GM18951 (cell line): ENCODE measurements at regions of chr4 and their contacts with region 1.

Region 1: DNA sequence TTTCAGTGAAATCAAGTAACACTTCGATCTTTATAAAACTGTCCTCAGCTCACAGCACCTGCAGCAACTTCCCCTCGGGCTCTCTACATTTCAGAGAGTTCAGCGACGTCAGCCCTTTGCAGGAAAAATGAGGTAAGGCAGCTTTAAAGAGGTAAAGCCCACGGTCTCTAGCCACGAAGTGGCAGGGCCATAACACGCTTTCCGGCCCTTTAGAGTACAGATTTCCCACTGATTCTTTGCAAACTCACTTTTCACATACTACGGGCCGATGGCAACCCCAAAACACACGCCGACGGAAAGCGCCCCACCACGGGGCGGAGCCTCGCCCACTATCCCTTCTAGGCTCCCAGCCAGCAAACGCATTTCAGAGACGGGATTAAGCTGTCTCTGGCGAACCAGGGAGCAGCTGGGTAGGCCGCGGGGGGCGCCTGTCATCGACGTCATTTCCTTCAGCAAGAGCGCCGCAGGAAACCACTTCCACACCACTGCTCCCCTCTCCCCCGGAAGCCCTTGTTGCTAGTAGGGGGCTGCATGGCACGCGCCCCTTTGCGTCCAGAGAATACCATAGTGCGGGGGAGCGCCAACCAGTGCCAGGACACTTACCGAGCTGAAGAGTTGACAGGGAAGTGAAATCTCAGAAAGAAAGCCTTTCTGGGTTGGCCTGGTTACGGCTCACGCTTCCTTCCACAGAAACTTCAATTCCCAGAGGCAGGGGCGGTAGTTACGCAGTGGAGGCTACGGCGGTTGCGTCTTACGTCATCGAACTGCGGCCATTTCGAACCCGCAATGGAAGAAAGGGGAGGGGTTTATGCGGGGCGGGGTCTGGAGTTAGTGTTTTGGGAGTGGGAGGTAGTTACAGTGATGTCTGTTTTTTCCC is at the start of gene TRMT10A:
- POLR2A ChIP-seq: peak; percentile 83

Region 2: GRCh38 chr4:99324979-99325378 is 238.6 kb before region 1 on chr4:
- in situ Hi-C with region 1: no loop called
- POLR2A ChIP-seq: no peak

Region 3: DNA sequence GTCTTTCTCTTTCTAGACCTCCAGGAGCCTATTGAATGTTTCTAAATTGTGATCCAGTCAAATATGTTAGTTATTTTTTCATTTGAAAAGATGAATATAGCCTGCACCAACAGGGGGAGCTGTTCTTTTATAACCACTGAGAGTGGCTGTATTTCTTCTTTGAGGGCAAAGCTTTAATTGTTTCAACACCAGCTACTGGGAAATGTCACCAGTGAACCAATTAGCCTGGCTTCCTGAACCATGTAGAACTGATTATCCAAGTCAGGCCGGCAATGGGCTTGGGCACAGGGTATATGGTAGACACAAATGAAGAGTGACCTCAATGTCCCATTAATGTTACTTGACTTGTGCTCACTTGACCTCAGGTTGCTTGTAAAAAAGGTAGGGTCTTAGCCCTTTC is 248.3 kb after region 1 on chr4:
- in situ Hi-C with region 1: loop called (anchors 5 kb)
- POLR2A ChIP-seq: no peak

Region 4: DNA sequence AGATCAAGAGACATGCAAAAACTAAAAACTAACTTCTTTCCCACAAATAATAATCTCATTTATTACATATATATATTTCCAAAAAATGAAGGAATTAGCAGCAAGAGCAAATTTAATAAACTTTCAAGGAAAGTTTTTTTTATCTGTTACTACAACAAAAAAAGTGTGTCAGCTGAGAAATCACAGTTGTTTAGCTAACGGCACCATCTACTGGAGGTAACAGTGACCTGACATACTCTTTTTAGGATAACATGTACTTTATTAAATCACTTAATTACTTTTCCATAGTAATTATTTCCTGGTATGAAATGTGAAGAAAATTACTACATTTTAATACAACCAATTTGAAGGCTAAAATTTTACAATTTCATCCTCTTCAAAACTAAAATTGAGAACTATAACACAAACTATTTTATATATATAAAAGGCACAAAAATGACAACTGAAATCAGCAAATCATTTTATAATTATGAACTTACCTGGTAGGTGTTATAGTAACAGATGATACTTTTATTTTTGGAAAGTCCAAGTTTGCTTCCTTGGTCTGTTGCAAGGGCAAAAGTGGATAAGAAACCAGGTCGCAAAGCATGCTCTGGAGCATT is 321.6 kb after region 1 on chr4:
- in situ Hi-C with region 1: loop called (anchors 5 kb)
- POLR2A ChIP-seq: no peak